Naive thymus-derived CD4-positive, alpha-beta T cell (primary cell): ENCODE measurements at regions of chr11 and their contacts with region 1.

Region 1: GRCh38 chr11:44634401-44635281 is 69.2 kb downstream of the CD82 start:
- DNase-seq: peak in 1 of 9 donors; percentile 17
- ATAC-seq: no peak
- H3K4me3 ChIP-seq: no peak overlapping the region
- H3K4me3 Mint-ChIP-seq: no peak overlapping the region
- H3K27ac ChIP-seq: no peak overlapping the region
- H3K27ac Mint-ChIP-seq: no peak overlapping the region
- H3K4me1 ChIP-seq: no peaks in the 10 kb centered on the region
- H3K4me1 Mint-ChIP-seq: peaks cover 2 to 23% (median 11%) of the 10 kb centered on the region in 7 donors
- H3K27me3 ChIP-seq: peaks cover 0 to 3% of the 10 kb centered on the region in 2 donors
- H3K27me3 Mint-ChIP-seq: peaks cover 0 to 27% (median 0%) of the 10 kb centered on the region in 5 donors

Region 2: GRCh38 chr11:44223238-44223637 is 411.4 kb before region 1 on chr11:
- CTCF ChIA-PET with region 1: no interaction called
- POLR2A ChIA-PET with region 1: no interaction called
- intact Hi-C with region 1: no loop called
- DNase-seq: no peak
- ATAC-seq: no peak
- H3K4me3 ChIP-seq: no peak overlapping the region
- H3K4me3 Mint-ChIP-seq: no peak overlapping the region
- H3K27ac ChIP-seq: no peak overlapping the region
- H3K27ac Mint-ChIP-seq: no peak overlapping the region
- H3K4me1 ChIP-seq: peaks cover 0 to 3% of the 10 kb centered on the region in 2 donors
- H3K4me1 Mint-ChIP-seq: peaks cover 0 to 31% (median 16%) of the 10 kb centered on the region in 7 donors
- H3K27me3 ChIP-seq: no peaks in the 10 kb centered on the region
- H3K27me3 Mint-ChIP-seq: no peaks in the 10 kb centered on the region

Region 3: GRCh38 chr11:44286268-44286880 is 348.3 kb before region 1 on chr11:
- CTCF ChIA-PET with region 1: no interaction called
- POLR2A ChIA-PET with region 1: no interaction called
- intact Hi-C with region 1: loop called in 1 of 2 experiments (anchors 10 kb)
- DNase-seq: peak in 8 of 9 donors; percentile 17 to 56 (median 40)
- ATAC-seq: peak; percentile 67
- H3K4me3 ChIP-seq: no peak overlapping the region
- H3K4me3 Mint-ChIP-seq: no peak overlapping the region
- H3K27ac ChIP-seq: no peak overlapping the region
- H3K27ac Mint-ChIP-seq: peak overlapping the region in 1 of 9 donors; percentile 48
- H3K4me1 ChIP-seq: no peaks in the 10 kb centered on the region
- H3K4me1 Mint-ChIP-seq: peaks cover 0 to 4% (median 0%) of the 10 kb centered on the region in 7 donors
- H3K27me3 ChIP-seq: no peaks in the 10 kb centered on the region
- H3K27me3 Mint-ChIP-seq: peaks cover 0 to 14% (median 3%) of the 10 kb centered on the region in 5 donors

Region 4: GRCh38 chr11:44538375-44539054 is 96.1 kb before region 1 on chr11:
- CTCF ChIA-PET with region 1: no interaction called
- POLR2A ChIA-PET with region 1: no interaction called
- intact Hi-C with region 1: no loop called
- DNase-seq: peak; percentile 26 to 74 (median 57)
- ATAC-seq: peak; percentile 90
- H3K4me3 ChIP-seq: no peak overlapping the region
- H3K4me3 Mint-ChIP-seq: no peak overlapping the region
- H3K27ac ChIP-seq: no peak overlapping the region
- H3K27ac Mint-ChIP-seq: peak overlapping the region in 1 of 9 donors; percentile 48
- H3K4me1 ChIP-seq: no peaks in the 10 kb centered on the region
- H3K4me1 Mint-ChIP-seq: peaks cover 0 to 6% (median 0%) of the 10 kb centered on the region in 7 donors
- H3K27me3 ChIP-seq: no peaks in the 10 kb centered on the region
- H3K27me3 Mint-ChIP-seq: peaks cover 0 to 4% (median 3%) of the 10 kb centered on the region in 5 donors

Region 5: DNA sequence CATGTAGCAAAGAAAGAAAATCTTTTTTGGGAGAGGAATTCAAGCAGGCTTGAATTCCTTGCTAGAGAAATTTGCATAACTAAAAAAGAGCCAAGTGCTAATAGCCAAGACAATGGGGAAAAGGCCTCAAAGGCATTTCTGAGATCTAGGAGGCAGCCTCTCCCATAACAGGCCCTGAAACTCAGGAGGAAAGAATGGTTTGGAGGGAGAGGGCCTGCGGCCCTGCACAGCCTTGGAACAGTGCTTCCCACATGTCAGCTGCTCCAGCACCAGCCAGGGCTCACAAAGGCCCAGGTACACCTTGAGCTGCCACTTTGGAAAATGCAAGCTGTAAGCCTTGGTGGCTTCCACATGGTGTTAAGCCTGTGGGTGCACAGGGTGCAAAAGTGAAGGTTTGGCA is 36.6 kb after region 1 on chr11:
- CTCF ChIA-PET with region 1: no interaction called
- POLR2A ChIA-PET with region 1: no interaction called
- intact Hi-C with region 1: no loop called
- DNase-seq: no peak
- ATAC-seq: no peak
- H3K4me3 ChIP-seq: no peak overlapping the region
- H3K4me3 Mint-ChIP-seq: no peak overlapping the region
- H3K27ac ChIP-seq: no peak overlapping the region
- H3K27ac Mint-ChIP-seq: no peak overlapping the region
- H3K4me1 ChIP-seq: no peaks in the 10 kb centered on the region
- H3K4me1 Mint-ChIP-seq: peaks cover 2 to 29% (median 16%) of the 10 kb centered on the region in 7 donors
- H3K27me3 ChIP-seq: no peaks in the 10 kb centered on the region
- H3K27me3 Mint-ChIP-seq: peaks cover 0 to 31% (median 0%) of the 10 kb centered on the region in 5 donors